HAP-1 (cell line): ENCODE measurements at regions of chr17 and their contacts with region 1.

Region 1: DNA sequence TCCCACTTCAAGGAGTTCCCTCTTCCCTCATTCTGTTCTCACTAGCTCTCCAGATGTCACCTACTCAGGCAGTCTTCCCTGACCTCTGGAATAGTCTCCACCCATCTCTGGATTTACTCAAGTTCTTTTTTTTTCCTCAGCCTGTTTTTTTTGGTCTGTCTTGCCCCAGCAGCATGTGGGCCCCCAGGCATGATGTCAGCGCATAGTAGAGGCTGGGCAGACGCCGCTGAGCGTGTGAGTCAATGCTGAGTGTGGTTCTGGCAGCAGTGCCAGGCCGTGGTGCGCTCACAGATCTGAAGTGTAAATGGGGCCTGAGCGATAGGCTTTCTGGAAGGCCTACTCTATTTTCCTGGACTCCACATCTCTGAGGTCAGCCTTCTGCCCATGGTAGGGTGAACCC is 2.7 kb upstream of the KCNJ18 start:
- DNase-seq: no peak
- H3K4me3 ChIP-seq: no peak overlapping the region
- H3K4me1 ChIP-seq: no peaks in the 10 kb centered on the region
- H3K27me3 ChIP-seq: no peaks in the 10 kb centered on the region

Region 2: DNA sequence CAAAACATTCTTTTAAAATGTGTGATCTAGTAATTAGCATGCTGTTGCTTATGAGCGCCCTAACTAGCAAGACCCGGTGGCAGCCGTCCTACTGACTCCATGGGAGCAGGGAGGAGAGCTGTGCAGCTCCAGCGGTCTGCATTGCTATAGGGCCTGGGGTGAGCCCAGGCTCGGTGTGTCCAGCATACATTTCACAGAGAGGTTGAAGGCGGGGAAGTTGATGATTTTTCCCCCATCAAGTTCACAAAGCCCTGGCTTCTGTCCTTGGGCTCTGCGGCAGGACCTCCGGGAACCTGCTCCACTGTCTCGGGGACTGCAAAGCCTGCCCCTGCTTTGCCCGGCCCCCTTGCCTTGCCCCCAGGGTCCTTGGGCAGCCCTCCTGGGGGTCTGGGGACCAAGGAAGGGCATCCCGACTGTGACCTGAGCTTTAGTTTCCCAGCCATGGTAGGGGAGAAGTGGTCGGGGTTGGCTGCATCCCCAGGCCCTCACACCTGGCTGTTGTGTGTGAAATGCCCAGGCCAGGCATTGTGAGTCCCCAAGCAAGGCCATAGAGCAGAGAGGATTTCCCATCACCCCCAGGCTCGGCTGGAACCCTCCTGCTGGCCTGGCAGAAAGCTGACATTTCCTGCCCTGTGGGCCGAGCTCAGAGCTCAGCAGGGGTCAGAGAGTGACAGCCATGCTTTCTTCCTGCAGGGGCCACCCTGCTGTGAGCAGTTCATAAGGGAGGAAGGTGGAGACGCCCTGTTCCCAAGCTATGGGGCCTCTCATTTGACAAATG is 288.6 kb before region 1 on chr17:
- in situ Hi-C with region 1: loop called (anchors 5 kb)
- DNase-seq: no peak
- H3K4me3 ChIP-seq: no peak overlapping the region
- H3K4me1 ChIP-seq: no peaks in the 10 kb centered on the region
- H3K27me3 ChIP-seq: no peaks in the 10 kb centered on the region